GM12878 (cell line): ENCODE measurements at regions of chr1 and their contacts with region 1.

Region 1: DNA sequence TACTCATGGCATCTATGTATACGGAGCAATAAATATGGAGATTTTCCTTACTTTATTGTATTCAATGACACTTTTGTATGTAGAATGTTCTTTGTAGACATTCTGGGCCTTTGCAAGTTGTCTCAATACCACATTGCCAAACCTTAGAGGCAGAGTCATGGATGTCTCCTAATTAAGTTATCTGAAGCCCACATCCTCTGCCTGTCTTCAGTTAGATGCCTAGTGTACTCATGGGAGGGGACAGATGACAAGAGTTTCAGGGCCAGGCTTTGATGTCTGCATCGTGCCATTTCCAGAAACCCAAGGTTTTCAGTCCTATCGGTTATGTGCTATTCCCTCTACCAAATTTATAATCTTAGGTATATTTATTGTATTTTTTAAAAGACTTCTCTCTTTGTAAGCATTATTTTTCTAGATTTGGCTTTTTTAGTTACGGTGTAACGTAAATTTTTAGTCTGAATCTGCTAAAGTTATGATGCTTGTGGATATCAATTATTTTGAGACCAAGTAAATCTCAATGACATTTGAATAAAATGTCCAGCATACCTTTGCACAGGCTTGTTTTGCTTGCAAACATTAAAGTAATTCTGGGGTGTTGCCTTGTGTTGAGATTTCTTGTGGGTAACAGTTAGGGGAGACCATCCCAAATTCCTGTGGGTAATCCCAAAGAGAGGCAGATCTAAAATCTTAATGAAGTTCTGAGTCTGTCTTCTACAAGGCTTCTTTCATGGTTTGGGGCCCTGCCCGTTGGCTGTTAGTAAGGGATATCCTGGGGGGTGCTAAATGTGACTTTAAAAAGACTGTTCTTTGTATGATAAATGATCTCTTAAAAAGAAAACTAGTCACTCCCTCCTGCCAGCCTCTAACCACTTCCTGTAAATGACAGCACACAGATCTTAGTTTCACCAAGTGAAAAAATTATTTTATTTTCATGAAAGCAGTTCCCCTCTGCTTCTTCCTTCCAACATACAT is 8.0 kb upstream of the MACF1 start:
- DNase-seq: no peak
- ATAC-seq: peak; percentile 77
- H3K4me3 ChIP-seq: peak overlapping the region; percentile 26
- H3K27ac ChIP-seq: peak overlapping the region; percentile 53
- H3K4me1 ChIP-seq: peaks cover 54% of the 10 kb centered on the region
- H3K27me3 ChIP-seq: no peaks in the 10 kb centered on the region
- CTCF ChIP-seq: no peak
- EP300 ChIP-seq: peak in 1 of 2 experiments; percentile 60; a peak in 1 of 4 replicates
- POLR2A ChIP-seq: no peak
- RAD21 ChIP-seq: no peak

Region 2: DNA sequence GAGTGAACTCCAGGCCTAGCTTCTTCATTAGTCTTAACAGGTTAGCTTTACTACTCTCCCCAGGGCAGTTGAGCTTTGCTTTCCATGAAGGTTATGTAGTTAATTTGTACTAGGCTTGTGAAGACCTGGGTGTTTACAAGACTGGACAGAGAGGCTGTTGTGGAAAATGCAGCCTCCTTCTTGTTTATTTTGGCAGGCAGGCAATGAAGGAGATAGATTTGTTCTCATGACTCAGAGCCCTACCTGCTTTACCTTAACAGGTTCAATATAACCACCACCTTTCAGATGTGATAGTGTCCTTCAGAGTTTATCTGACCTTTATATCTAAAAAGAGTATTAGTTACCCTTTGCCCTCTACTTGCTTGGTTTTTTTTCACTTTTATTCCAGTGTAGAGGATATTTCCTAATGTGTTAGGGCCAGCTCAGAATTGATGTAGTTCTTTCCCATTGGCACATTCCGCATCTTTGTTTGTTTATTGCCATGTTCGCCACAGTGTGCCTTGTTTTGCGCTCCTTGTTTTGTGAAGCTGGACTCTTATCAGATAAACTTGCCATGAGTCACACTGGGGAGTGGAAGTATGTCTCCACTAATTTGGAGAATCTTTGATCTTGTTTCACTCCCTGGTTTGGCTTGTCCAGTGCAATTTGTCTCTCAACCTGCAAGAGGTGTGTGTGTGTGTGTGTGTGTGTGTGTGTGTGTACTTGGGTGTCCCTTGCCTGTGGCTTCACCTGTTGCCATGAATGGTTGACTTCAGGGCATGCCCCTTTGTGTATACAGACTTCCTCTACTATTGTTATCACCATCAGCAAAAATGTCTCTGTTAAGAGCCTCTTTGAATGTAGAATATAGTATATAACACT is 79.4 kb before region 1 on chr1:
- CTCF ChIA-PET with region 1: interaction called, 127 read pairs
- POLR2A ChIA-PET with region 1: no interaction called
- RAD21 ChIA-PET with region 1: interaction called, 8 read pairs
- SMC1A ChIA-PET with region 1: interaction called, 149 read pairs
- in situ Hi-C with region 1: no loop called
- intact Hi-C with region 1: no loop called
- DNase-seq: no peak
- ATAC-seq: no peak
- H3K4me3 ChIP-seq: no peak overlapping the region
- H3K27ac ChIP-seq: no peak overlapping the region
- H3K4me1 ChIP-seq: peaks cover 7% of the 10 kb centered on the region; the same call in 1 of the 2 replicates
- H3K27me3 ChIP-seq: no peaks in the 10 kb centered on the region
- CTCF ChIP-seq: no peak
- EP300 ChIP-seq: no peak
- POLR2A ChIP-seq: no peak
- RAD21 ChIP-seq: no peak

Region 3: DNA sequence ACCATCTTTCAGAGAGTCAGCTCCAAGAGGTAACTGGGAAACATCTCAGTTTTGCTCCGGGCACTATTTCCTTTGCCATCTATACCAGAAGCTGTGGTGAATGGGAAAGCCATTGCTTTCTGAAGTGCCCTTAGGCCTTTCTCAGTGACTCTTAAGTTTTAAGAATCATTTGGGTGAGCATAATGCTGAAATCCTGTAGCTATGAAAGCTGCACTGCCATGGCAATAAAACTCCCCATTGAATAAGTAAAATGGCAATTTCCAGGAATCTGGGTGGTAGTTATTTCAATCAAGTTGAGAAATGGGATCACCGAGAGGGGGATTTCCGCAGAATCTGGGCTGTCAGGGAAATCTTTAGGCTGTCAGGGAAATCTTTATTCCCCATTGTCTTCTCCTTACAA is 18.8 kb before region 1 on chr1:
- CTCF ChIA-PET with region 1: interaction called, 49 read pairs
- POLR2A ChIA-PET with region 1: no interaction called
- RAD21 ChIA-PET with region 1: interaction called, 12 read pairs
- SMC1A ChIA-PET with region 1: interaction called, 16 read pairs
- in situ Hi-C with region 1: no loop called
- intact Hi-C with region 1: no loop called
- DNase-seq: no peak
- ATAC-seq: no peak
- H3K4me3 ChIP-seq: no peak overlapping the region
- H3K27ac ChIP-seq: no peak overlapping the region
- H3K4me1 ChIP-seq: no peaks in the 10 kb centered on the region
- H3K27me3 ChIP-seq: no peaks in the 10 kb centered on the region
- CTCF ChIP-seq: no peak
- EP300 ChIP-seq: no peak
- POLR2A ChIP-seq: no peak
- RAD21 ChIP-seq: no peak

Region 4: GRCh38 chr1:39250460-39251240 is 54.1 kb after region 1 on chr1:
- CTCF ChIA-PET with region 1: interaction called, 918 read pairs
- POLR2A ChIA-PET with region 1: no interaction called
- RAD21 ChIA-PET with region 1: interaction called, 393 read pairs
- SMC1A ChIA-PET with region 1: interaction called, 655 read pairs
- in situ Hi-C with region 1: no loop called
- intact Hi-C with region 1: no loop called
- DNase-seq: no peak
- ATAC-seq: no peak
- H3K4me3 ChIP-seq: no peak overlapping the region
- H3K27ac ChIP-seq: no peak overlapping the region
- H3K4me1 ChIP-seq: peaks cover 2% of the 10 kb centered on the region; the same call in 1 of the 2 replicates
- H3K27me3 ChIP-seq: no peaks in the 10 kb centered on the region
- CTCF ChIP-seq: no peak
- EP300 ChIP-seq: no peak
- POLR2A ChIP-seq: no peak
- RAD21 ChIP-seq: no peak

Region 5: DNA sequence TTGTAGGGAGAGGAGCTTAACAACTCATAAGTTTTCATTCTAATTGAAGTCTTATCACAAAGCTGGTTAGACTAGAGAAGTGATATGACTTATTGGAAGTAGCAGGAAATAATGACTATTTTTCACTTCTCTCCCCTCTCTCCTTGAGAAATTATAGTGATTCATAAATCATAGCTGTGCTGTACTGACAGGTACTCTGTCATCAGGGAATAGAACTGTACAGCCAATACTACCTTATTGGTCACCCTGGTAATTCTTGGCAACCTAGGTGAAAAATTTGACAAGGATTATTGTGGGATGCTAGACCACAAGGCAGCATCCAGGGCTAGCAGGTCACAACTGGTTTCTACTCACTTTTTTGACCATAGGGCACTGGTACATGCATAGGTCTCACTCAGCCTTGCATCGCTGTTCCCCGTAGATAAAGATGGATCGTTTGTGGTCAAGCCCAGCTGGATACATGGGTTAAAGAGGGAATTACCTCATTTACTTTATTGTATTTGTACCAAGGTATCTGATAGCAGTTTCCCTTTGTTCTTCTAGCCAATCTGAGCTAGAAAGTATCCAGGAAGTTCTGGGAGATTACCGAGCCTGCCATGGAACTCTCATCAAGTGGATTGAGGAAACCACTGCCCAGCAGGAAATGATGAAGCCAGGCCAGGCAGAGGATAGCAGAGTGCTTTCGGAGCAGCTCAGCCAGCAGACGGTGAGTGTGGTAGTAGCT is 121.5 kb after region 1 on chr1:
- CTCF ChIA-PET with region 1: interaction called, 11 read pairs
- POLR2A ChIA-PET with region 1: no interaction called
- RAD21 ChIA-PET with region 1: interaction called, 6 read pairs
- SMC1A ChIA-PET with region 1: interaction called, 12 read pairs
- in situ Hi-C with region 1: no loop called
- intact Hi-C with region 1: no loop called
- DNase-seq: no peak
- ATAC-seq: no peak
- H3K4me3 ChIP-seq: no peak overlapping the region
- H3K27ac ChIP-seq: no peak overlapping the region
- H3K4me1 ChIP-seq: peaks cover 16% of the 10 kb centered on the region
- H3K27me3 ChIP-seq: no peaks in the 10 kb centered on the region
- CTCF ChIP-seq: no peak
- EP300 ChIP-seq: no peak
- POLR2A ChIP-seq: no peak
- RAD21 ChIP-seq: no peak

Region 6: GRCh38 chr1:39434797-39435395 is 238.4 kb after region 1 on chr1:
- CTCF ChIA-PET with region 1: interaction called, 12 read pairs
- POLR2A ChIA-PET with region 1: no interaction called
- RAD21 ChIA-PET with region 1: interaction called, 3 read pairs
- SMC1A ChIA-PET with region 1: interaction called, 3 read pairs
- in situ Hi-C with region 1: no loop called
- intact Hi-C with region 1: no loop called
- DNase-seq: no peak
- ATAC-seq: no peak
- H3K4me3 ChIP-seq: no peak overlapping the region
- H3K27ac ChIP-seq: no peak overlapping the region
- H3K4me1 ChIP-seq: no peaks in the 10 kb centered on the region
- H3K27me3 ChIP-seq: no peaks in the 10 kb centered on the region
- CTCF ChIP-seq: no peak
- EP300 ChIP-seq: no peak
- POLR2A ChIP-seq: no peak
- RAD21 ChIP-seq: no peak